Posterior vena cava (tissue), 2 donors: ENCODE measurements at regions of chr5 and their contacts with region 1.

Region 1: DNA sequence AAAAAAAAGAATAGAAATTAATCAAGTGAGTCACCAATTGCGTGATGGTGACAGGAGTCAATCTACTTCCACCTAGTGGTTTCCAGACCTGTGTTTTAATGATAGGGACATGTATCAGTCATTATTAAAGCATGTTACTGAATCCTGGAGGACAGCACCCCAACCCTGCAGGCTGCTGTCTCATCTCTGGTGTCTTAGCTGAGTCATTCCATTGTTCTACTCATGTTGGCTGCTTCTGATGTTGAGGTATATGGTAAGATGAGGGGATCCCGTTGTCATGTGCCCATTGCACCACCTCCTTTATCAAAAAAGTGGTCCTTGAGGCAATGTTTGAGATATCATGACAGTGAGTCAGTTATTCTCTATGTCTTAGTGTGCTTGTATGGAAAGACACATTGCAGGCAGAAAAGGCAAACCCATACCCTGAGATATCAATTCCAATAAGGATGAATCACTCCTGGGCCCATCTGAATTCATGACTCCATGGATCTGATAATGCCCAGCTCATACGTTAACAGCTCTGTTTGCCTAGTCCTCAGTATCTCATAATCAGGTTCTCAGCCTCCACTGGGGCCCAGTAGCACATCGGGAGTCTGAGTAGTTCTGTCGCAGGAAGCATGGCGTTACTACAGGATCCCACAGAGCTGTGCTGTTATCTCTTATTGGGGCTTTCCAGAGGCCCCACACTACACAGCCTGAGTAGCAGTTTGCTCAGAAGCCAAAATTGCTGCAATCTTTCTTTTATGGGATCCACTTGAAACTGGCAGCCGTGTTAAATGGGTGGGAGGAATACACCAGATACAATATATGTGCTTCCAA is 31.2 kb downstream of the HMGCS1 start:
- DNase-seq: no peak

Region 2: GRCh38 chr5:43020294-43020711 is 261.7 kb before region 1 on chr5:
- intact Hi-C with region 1: no loop called
- DNase-seq: no peak

Region 3: DNA sequence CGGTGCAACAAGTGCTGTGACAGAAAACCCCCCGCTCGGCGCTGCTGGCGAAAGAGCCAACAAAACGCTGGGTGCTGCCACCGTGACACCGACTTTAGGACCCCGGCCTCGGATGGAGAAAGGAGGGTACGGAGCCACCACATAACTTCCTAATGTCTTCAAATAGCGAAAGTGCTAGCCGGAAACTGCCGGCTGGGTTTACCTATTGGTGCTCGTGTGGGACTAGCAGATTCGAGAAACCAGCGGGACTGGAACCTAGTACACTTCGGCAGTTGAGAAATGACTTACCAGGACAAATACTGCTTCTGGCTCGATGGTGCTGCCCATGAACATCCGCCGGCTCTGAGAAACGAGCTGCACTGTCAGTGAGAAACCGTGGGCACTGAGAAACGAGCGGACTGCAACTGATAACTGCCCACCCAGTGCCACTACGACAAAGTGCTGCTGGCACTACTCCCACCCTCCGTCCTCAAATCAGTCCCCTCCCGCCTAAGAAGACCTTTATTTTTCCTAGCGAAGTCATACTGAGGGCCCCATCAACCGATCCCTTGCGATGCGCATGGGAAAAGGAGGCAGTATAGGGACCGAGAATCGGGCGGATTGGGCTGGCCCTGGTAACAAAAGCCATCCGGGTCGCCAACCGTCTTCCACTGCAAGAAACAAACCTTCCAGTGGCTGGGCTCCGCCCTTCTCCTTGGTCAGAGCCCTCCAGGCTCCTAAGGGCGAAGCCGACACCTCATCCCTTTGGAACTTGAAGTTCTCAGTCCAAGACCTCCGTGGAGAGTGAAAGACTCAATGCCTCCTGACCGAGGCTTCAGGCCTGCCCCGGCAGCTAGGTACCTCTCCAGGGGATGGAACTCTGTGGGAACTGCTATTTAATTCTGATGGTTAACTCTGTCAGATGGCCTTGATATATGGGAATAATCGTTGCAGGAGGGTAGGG is 215.0 kb before region 1 on chr5:
- intact Hi-C with region 1: no loop called
- DNase-seq: peak; percentile 95

Region 4: DNA sequence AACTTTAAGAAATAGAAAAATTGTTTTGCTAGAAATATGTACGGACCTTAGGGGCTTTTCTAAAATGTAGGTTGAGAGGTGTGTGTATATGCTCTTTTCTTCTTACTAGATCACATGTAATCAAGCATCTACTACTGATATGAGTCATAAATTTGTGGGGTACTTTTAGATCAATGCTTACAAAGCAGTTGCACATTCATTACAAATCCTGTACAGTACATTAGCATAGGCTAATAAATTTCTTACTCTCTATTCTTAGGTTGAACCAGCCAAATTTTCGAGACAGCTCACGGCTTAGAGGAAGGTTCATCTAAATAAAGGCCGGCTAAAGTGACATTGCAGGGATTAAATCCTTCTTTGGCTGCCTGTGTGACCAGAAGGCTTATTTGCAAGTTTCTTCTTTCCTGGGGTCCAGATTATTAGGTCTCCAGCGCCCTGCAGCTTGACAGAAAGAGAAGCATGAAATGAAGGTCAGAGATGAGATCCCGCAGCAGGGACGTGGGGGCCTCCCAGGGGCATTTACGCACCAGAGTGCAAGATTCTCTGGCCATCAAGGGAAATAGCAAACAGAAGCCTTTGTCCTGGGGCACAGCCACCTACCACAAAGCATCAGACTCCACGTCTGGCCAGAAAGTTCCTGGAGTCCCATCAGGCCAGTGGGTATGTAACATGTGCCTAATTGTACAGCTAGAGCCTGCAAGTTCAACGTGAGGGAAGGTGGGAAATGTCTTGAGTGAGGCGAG is 37.1 kb before region 1 on chr5:
- intact Hi-C with region 1: loop called in 1 of 2 experiments (anchors 1 kb)
- DNase-seq: no peak